Heart right ventricle (tissue), 16 donors: ENCODE measurements at regions of chrX and their contacts with region 1.

Region 1: GRCh38 chrX:117996918-117997480 is 119.6 kb downstream of the KLHL13 start:
- DNase-seq: no peak
- ATAC-seq: no peak
- H3K4me3 ChIP-seq: no peak overlapping the region
- H3K27ac ChIP-seq: no peak overlapping the region
- H3K4me1 ChIP-seq: peaks cover 0 to 3% (median 0%) of the 10 kb centered on the region in 9 donors
- H3K27me3 ChIP-seq: no peaks in the 10 kb centered on the region
- CTCF ChIP-seq: peak in 8 of 9 donors; percentile 13 to 50 (median 32)

Region 2: DNA sequence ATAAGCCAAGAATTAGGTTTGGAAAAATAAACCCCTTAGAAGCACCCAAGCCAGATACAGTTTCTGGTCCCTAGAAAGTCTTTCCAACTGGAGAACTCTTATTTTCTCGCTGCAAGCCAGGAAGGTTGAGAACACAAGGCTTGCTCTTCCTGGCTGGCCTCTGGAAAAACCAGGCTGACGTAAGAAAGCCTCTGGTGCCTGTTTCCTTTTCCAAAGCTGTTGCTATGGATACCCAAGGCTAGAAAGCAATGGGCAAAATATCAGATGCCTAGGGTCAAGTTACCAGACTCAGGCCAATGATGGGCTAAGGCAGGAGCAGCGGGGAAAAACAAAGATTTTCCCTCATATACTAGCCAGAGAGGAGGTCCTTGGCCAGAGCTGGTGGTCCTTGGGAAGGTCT is 162.0 kb before region 1 on chrX:
- intact Hi-C with region 1: no loop called
- DNase-seq: no peak
- ATAC-seq: no peak
- H3K4me3 ChIP-seq: no peak overlapping the region
- H3K27ac ChIP-seq: no peak overlapping the region
- H3K4me1 ChIP-seq: no peaks in the 10 kb centered on the region
- H3K27me3 ChIP-seq: no peaks in the 10 kb centered on the region
- CTCF ChIP-seq: no peak

Region 3: GRCh38 chrX:118116713-118117550 is 119.9 kb after region 1 on chrX and contains the start of gene KLHL13:
- intact Hi-C with region 1: loop called in 1 of 10 experiments (anchors 10 kb)
- DNase-seq: peak; percentile 31 to 47
- ATAC-seq: peak; percentile 72 to 93 (median 84)
- H3K4me3 ChIP-seq: peak within 1 kb of the TSS; percentile 32 to 66 (median 60)
- H3K27ac ChIP-seq: peak within 1 kb of the TSS; percentile 21 to 84 (median 73)
- H3K4me1 ChIP-seq: peaks cover 0 to 7% (median 0%) of the 10 kb centered on the region in 9 donors
- H3K27me3 ChIP-seq: peaks cover 0 to 26% (median 0%) of the 10 kb centered on the region in 7 donors
- CTCF ChIP-seq: no peak
- total RNA-seq, gene KLHL13: 2.9 to 18.9 (median 12.0) TPM

Region 4: GRCh38 chrX:118226090-118226428 is 229.1 kb after region 1 on chrX:
- intact Hi-C with region 1: loop called in 6 of 10 experiments (anchors 5 to 10 kb)
- DNase-seq: no peak
- ATAC-seq: peak in 1 of 8 donors; percentile 56
- H3K4me3 ChIP-seq: no peak overlapping the region
- H3K27ac ChIP-seq: no peak overlapping the region
- H3K4me1 ChIP-seq: peaks cover 0 to 4% (median 0%) of the 10 kb centered on the region in 9 donors
- H3K27me3 ChIP-seq: peaks cover 0 to 23% (median 0%) of the 10 kb centered on the region in 7 donors
- CTCF ChIP-seq: peak in 7 of 9 donors; percentile 26 to 56 (median 51)